ENCODE measurements at regions of chr10 and their contacts with region 1.

Region 1: DNA sequence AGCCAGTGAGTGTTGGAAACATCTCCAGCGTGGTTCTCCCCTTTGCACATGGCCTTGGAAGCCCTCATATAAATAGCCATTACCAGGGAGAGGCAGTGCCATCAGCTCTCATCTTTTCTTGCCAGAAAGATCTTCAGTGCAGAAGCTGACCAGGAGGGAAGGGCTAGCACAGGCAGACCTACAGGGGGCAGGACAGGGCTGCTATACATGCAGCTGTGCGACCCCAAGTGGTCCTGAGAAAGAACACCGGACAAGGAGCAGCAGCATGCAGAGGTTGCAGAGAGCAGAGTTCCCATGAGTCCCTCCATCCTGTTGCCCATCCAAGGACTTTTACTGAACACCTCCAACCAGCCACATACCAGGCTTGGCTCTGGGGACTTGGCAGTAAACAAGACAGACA is 17.1 kb downstream of the GRID1 start:
- DNase-seq: peak; percentile 56 to 63
- H3K4me3 ChIP-seq: no peak overlapping the region
- H3K27ac ChIP-seq: no peak overlapping the region
- H3K4me1 ChIP-seq: peaks cover 0 to 2% (median 0%) of the 10 kb centered on the region in 4 experiments; a peak in 1 of 7 replicates
- H3K27me3 ChIP-seq: no peaks in the 10 kb centered on the region
- CTCF ChIP-seq: peak; percentile 99 to 100 (median 100)
- EP300 ChIP-seq: no peak
- POLR2A ChIP-seq: no peak
- RAD21 ChIP-seq: peak; percentile 81 to 87

Region 2: GRCh38 chr10:86178401-86179152 is 170.9 kb before region 1 on chr10:
- CTCF ChIA-PET with region 1: interaction called, 36 read pairs
- POLR2A ChIA-PET with region 1: no interaction called
- DNase-seq: peak; percentile 47 to 83
- H3K4me3 ChIP-seq: no peak overlapping the region
- H3K27ac ChIP-seq: no peak overlapping the region
- H3K4me1 ChIP-seq: no peaks in the 10 kb centered on the region
- H3K27me3 ChIP-seq: no peaks in the 10 kb centered on the region; a peak in 1 of 7 replicates
- CTCF ChIP-seq: peak; percentile 87 to 95 (median 90)
- EP300 ChIP-seq: no peak
- POLR2A ChIP-seq: no peak
- RAD21 ChIP-seq: peak; percentile 81 to 88

Region 3: DNA sequence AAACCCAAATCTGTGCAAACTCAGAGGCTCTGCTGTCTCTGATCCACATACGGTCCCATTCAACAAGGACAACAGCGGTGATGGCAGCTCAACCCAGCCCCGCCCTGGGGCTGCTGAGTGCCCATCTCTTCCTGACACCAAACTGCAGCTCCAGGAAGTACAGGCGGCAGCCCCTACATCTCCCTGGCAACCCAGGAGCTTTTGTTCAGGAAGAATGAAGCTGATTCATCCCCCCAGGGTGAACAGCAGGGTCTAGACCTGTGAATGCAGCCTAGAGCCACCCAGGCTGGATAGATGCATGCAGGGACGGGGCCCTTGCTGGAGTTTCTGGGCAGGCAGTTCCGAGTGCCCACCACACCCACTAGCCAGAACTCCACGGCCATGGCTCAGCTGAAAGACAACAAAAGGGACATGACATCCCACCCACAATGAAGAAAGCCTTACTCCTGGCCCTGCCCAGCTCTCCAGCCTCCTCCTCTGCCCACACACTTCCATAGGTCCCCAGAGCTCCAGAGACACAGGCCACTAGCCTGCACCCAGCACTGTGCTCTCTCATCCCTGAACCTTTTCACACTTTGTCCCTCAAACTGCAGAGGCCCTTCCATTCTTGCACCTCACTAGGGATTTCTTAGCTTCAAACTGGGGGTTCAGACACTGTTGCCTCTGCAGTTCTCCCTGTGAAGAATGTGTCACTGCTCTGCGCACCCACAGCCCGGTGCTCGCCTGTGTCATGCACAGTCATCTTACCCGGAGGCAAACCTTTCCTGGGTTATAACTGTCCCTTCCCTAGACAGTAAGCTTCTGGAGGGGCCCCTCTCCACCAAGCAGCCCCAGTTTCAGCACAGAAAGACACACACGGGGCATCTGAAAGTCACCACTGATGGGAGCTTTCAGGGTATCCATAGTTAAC is 81.9 kb before region 1 on chr10:
- CTCF ChIA-PET with region 1: interaction called, 51 read pairs
- POLR2A ChIA-PET with region 1: no interaction called
- DNase-seq: peak in 1 of 2 experiments; percentile 45
- H3K4me3 ChIP-seq: no peak overlapping the region
- H3K27ac ChIP-seq: no peak overlapping the region
- H3K4me1 ChIP-seq: peaks cover 0 to 9% (median 2%) of the 10 kb centered on the region in 4 experiments; a peak in 6 of 7 replicates
- H3K27me3 ChIP-seq: peaks cover 0 to 10% (median 4%) of the 10 kb centered on the region in 4 experiments; a peak in 5 of 7 replicates
- CTCF ChIP-seq: no peak
- EP300 ChIP-seq: no peak
- POLR2A ChIP-seq: no peak
- RAD21 ChIP-seq: no peak

Region 4: GRCh38 chr10:86312701-86313516 is 36.6 kb before region 1 on chr10:
- CTCF ChIA-PET with region 1: interaction called, 13 read pairs
- POLR2A ChIA-PET with region 1: no interaction called
- DNase-seq: no peak
- H3K4me3 ChIP-seq: no peak overlapping the region
- H3K27ac ChIP-seq: no peak overlapping the region
- H3K4me1 ChIP-seq: peaks cover 0 to 6% (median 2%) of the 10 kb centered on the region in 4 experiments; a peak in 3 of 7 replicates
- H3K27me3 ChIP-seq: 0 out of 7 replicates have a peak, but pooled peaks cover 0 to 2% (median 0%) of the 10 kb centered on the region in 4 experiments
- CTCF ChIP-seq: no peak
- EP300 ChIP-seq: no peak
- POLR2A ChIP-seq: no peak
- RAD21 ChIP-seq: no peak

Region 5: DNA sequence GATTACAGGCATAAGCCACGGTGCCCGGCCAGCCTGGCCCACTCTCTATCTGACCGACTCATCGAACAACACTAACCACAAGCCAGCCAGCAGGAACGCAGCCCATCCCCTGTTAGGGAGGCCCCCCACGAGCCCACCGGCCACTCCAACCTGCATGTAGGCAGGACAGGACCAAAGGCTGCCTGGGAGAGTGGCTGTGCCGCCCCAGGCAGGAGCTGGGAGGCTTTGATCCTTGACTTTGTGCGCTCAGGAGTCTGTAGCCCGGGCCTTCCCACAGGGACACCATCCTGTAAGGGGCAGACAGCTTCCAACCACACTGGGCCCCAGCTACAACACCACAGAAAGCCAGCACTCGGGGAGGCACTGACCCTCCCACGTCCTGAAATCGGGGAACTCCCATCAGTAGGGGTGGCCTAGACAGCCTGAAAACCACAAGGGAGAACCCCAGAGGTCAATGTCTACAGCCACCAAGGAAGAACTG is 12.3 kb before region 1 on chr10:
- CTCF ChIA-PET with region 1: interaction called, 45 read pairs
- POLR2A ChIA-PET with region 1: interaction called, 3 read pairs
- DNase-seq: no peak
- H3K4me3 ChIP-seq: no peak overlapping the region
- H3K27ac ChIP-seq: no peak overlapping the region
- H3K4me1 ChIP-seq: peaks cover 3 to 16% (median 11%) of the 10 kb centered on the region in 4 experiments; a peak in 6 of 7 replicates
- H3K27me3 ChIP-seq: 0 out of 7 replicates have a peak, but pooled peaks cover 0 to 3% (median 0%) of the 10 kb centered on the region in 4 experiments
- CTCF ChIP-seq: no peak
- EP300 ChIP-seq: no peak
- POLR2A ChIP-seq: no peak
- RAD21 ChIP-seq: no peak

Region 6: DNA sequence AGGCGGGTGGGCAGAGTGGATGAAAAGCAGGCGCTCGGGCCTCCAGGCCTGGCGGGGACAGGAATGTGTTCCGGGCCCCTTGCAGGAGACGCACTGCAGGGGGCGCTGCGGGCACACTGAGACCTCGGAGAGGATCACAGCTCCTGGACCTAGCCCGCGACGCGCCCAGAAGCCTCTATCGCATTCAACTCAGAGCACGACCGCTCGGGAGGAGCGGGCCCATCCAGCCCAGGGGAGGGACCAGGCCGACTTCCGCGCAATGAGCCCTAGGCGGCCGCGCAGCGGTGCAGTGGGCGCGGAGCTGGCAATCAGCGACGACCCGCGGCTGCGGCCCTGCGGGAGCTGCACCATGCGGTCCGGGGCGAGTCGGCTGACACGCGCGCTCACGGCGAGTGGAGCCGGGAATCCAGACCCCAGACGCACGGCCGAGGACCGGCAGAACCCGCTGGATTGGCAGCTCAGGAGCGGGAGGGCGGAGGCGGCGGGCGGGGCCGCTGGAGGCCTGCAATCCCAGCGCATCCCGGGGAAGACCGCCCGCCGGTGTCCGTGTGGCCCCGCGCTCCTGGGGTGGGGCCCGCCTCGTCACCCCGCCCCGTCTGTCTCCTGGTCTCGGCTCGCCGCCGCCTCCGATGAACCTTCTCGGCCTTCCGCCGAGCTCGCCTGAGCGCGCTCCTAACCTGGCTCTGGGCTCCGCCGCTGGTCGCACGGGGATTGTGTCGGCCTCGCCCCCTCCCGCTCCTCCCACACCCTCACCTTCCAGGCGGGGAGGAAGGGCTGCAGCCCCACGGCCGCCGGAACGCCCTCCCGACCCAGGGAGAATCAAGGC is 50.6 kb after region 1 on chr10:
- CTCF ChIA-PET with region 1: no interaction called
- POLR2A ChIA-PET with region 1: no interaction called
- DNase-seq: peak; percentile 94 to 99
- H3K4me3 ChIP-seq: peak overlapping the region; percentile 33 to 71 (median 62)
- H3K27ac ChIP-seq: no peak overlapping the region
- H3K4me1 ChIP-seq: peaks cover 0 to 7% (median 5%) of the 10 kb centered on the region in 4 experiments; a peak in 6 of 7 replicates
- H3K27me3 ChIP-seq: peaks cover 8 to 34% (median 31%) of the 10 kb centered on the region in 4 experiments
- CTCF ChIP-seq: peak; percentile 81 to 92 (median 88)
- EP300 ChIP-seq: 0 out of 3 replicates have a peak, but pooled peaks of 1 of the 2 experiments have one; percentile 7
- POLR2A ChIP-seq: no peak; a peak in 1 of 3 replicates
- RAD21 ChIP-seq: peak; percentile 87 to 91

Measured in H1 (cell line).